WTC11 (cell line): ENCODE measurements at regions of chr10 and their contacts with region 1.

Region 1: DNA sequence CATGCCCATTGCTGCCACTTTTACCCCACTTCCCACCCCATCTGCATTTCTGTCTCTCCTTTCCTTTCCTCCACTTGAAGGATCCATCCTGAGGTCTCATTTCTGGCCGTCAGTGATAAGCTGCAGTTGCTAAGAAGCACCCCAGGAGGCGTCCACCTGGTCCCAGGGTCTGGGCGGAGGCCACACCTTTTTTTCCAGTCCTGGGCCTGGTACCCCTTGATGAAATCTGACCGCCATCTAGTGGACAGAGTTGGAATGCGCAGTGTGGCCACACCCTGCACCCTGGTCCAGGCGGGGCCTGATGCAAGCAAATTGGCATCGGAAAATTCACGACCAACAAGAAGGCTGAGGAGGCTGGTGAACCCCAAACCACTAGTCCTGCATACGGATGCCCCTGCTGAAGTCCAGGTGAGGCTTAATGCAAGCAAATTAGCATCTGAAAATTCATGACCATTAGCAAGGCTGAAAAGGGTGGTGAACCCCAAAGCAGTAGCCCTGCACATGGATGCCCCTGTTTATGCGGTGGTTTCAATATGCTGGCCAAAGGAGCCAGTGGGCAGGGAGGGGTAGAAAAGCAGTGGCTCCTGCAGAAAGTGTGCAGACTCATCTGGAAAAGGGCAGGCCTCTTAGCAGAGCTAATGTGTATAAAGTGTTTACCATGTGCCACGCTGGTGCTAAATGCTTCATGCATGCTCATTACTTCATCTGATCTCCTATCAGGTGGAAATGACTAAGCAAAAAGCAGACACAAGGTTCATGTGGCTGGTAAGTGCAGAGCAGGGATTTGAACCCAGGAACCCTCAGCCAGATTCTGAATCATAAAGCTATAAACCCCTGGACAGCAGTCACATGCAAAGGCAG is 43.2 kb downstream of the GPAM start:
- DNase-seq: peak; percentile 94
- ATAC-seq: peak; percentile 96
- H3K4me3 Mint-ChIP-seq: no peak overlapping the region
- H3K27ac Mint-ChIP-seq: no peak overlapping the region
- H3K4me1 Mint-ChIP-seq: peaks cover 7% of the 10 kb centered on the region; the same call in 1 of the 2 replicates
- H3K27me3 Mint-ChIP-seq: no peaks in the 10 kb centered on the region; the same call in 1 of the 2 replicates
- CTCF ChIP-seq: peak; percentile 90

Region 2: DNA sequence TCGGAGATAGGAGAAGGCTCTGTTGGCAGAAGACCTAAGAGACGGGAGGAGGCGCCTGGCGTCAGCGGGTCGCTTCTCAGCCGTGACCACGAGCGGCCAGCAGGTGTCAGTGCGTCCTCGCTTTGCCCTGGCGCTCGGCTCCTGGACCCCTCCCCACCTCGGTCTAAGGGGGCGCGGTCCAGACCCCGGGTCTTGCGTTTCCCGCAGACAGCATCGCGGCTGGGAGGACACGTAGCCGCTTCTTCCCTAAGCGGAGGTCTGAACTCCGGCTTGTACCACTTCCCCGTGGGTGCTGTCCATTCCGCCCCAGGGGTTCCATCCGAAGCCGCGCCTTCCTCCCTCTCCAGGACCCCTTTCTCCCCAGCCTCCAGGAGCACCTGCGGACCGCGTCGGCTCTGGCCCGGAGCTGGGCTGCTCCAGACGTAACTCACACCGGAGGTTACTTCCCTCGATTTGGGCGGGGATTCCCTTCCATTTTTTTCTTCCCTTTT is 1064.1 kb before region 1 on chr10:
- CTCF ChIA-PET with region 1: interaction called, 19 read pairs
- POLR2A ChIA-PET with region 1: no interaction called
- DNase-seq: peak; percentile 92
- ATAC-seq: peak; percentile 82
- H3K4me3 Mint-ChIP-seq: peak overlapping the region; percentile 72
- H3K27ac Mint-ChIP-seq: no peak overlapping the region
- H3K4me1 Mint-ChIP-seq: peaks cover 10% of the 10 kb centered on the region
- H3K27me3 Mint-ChIP-seq: peaks cover 55% of the 10 kb centered on the region
- CTCF ChIP-seq: peak; percentile 66; the same call in 1 of the 2 replicates

Region 3: DNA sequence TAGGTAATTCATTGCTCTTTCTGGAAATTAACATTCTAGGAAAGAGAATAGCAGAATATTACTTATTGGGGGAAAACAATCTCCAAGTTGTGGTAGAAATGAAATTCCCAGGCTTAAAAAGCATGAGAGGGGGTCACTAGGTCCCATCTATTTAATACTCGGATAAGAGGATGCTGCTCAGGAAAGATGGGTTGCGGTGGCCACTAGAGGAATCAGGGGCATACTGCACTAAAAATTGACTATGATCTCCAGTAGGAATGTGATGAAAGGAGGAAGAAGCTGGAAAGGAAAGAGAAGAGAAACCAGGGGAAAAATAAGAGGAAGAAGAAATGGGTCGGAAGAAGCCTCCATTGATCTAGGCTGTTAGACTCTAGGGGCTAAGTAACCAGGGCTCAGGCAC is 149.6 kb before region 1 on chr10:
- CTCF ChIA-PET with region 1: interaction called, 14 read pairs
- POLR2A ChIA-PET with region 1: no interaction called
- DNase-seq: peak; percentile 28
- ATAC-seq: peak; percentile 89
- H3K4me3 Mint-ChIP-seq: no peak overlapping the region
- H3K27ac Mint-ChIP-seq: no peak overlapping the region
- H3K4me1 Mint-ChIP-seq: peaks cover 3% of the 10 kb centered on the region
- H3K27me3 Mint-ChIP-seq: no peaks in the 10 kb centered on the region; the same call in 1 of the 2 replicates
- CTCF ChIP-seq: no peak

Region 4: GRCh38 chr10:112026438-112026837 is 113.9 kb before region 1 on chr10:
- CTCF ChIA-PET with region 1: interaction called, 31 read pairs
- POLR2A ChIA-PET with region 1: no interaction called
- DNase-seq: peak; percentile 12
- ATAC-seq: peak; percentile 84
- H3K4me3 Mint-ChIP-seq: no peak overlapping the region
- H3K27ac Mint-ChIP-seq: no peak overlapping the region
- H3K4me1 Mint-ChIP-seq: no peaks in the 10 kb centered on the region
- H3K27me3 Mint-ChIP-seq: no peaks in the 10 kb centered on the region
- CTCF ChIP-seq: 0 out of 2 replicates have a peak, but pooled peaks have one; percentile 18

Region 5: GRCh38 chr10:112122827-112123226 is 17.5 kb before region 1 on chr10:
- CTCF ChIA-PET with region 1: interaction called, 47 read pairs
- POLR2A ChIA-PET with region 1: interaction called, 6 read pairs
- DNase-seq: no peak
- ATAC-seq: no peak
- H3K4me3 Mint-ChIP-seq: no peak overlapping the region
- H3K27ac Mint-ChIP-seq: no peak overlapping the region; the same call in 1 of the 2 replicates
- H3K4me1 Mint-ChIP-seq: peaks cover 8% of the 10 kb centered on the region
- H3K27me3 Mint-ChIP-seq: no peaks in the 10 kb centered on the region
- CTCF ChIP-seq: no peak

Region 6: DNA sequence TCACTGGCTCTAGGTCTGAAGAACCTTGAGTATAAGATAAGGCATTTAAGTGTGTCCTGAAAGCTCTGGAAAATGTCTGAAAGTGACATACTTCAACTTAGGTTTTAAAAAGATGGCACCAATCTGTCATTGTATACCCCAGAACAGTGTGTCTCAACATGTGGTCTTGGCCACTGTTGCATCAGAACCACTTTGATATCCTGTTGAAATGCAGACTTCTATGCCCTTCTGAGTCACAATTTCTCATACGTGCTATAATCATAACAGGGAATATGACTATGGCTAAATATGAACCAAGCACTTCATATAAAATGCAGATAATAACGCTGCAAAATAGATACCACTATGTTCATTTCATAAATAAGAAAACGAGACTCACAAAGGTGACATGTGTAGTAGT is 81.2 kb after region 1 on chr10:
- CTCF ChIA-PET with region 1: no interaction called
- POLR2A ChIA-PET with region 1: no interaction called
- DNase-seq: no peak
- ATAC-seq: no peak
- H3K4me3 Mint-ChIP-seq: no peak overlapping the region
- H3K27ac Mint-ChIP-seq: no peak overlapping the region
- H3K4me1 Mint-ChIP-seq: peaks cover 7% of the 10 kb centered on the region
- H3K27me3 Mint-ChIP-seq: no peaks in the 10 kb centered on the region
- CTCF ChIP-seq: no peak

Region 7: DNA sequence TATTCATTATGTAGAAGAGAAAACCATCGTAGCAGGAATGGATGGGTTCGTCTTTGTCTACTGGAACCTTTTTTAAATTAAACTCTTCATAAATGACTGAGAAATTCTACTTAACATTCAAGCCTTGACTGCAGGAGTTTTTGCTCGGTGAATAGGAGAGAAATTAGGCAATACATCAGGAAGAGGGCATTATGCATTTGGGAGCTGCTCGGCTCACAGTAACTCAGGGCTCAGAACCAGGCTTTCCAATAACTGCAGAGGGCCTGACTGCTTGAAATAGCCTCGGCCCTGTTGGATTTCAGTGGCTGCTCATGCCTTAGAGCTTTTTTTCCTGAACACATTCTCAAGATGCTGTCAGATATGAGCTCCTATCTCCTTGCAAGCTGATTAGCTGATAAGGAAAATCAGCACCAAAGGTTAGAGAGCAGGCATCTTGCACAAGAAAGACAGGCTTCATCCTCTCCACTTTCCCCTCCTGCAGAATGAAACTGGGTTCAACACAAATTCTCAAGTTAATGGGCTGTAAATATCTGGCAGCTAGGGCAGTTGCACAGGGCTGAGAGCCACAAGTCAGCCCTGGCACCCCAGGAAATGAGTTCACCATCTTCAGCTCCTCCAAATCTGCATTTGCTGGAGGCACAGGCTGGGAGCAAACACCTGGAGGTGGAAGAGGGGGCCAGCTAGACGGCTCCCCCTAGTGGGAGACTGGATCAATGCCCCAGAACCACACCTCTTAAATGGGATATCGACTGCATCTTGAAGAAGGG is 167.2 kb after region 1 on chr10:
- CTCF ChIA-PET with region 1: interaction called, 37 read pairs
- POLR2A ChIA-PET with region 1: interaction called, 3 read pairs
- DNase-seq: peak; percentile 79
- ATAC-seq: peak; percentile 98
- H3K4me3 Mint-ChIP-seq: no peak overlapping the region
- H3K27ac Mint-ChIP-seq: no peak overlapping the region
- H3K4me1 Mint-ChIP-seq: peaks cover 11% of the 10 kb centered on the region
- H3K27me3 Mint-ChIP-seq: no peaks in the 10 kb centered on the region; the same call in 1 of the 2 replicates
- CTCF ChIP-seq: peak; percentile 88